ENCODE measurements at regions of chr11 and their contacts with region 1.

Region 1: DNA sequence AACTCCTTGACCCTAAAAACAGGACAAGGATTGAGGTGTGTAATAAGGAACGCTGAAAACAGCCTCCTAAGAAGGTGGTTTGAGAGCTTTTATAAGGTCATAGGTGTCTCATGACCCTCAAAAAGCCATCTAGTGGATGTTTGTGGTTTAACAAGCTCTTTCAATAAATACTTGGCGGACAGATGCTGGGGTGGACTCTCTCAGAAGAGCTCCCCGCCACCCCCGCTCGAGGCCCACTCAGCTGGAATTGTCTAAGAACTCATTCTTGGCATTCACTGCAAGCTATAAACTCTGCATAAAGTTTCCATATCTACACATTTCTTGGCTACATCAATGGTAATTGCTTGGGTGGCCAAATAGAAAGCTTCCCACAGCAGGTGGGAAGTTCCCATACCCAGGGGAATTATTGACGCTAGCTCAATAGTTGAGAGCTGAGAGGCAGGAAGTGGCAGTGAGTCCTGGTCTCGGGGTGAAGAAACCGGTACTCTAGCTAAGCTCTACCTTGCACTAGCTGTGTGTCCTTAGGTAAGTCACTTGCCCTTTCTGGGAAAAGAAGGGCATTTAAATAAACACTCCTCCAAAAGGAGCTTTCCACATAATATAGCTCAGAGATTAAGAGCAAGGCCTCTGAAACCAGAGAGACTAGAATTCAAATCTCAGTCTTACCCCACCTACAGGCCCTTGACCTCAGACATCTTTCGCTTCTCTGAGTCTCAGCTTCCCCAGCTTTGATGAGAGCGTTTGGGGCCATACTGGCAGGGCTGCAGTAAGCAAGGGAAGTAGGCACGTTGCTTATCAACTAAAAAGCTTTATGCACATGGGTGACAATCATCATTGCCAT is 6.4 kb downstream of the MS4A15 start:
- DNase-seq: peak; percentile 66
- CTCF ChIP-seq: peak; percentile 49

Region 2: GRCh38 chr11:60544076-60544475 is 219.0 kb before region 1 on chr11:
- CTCF ChIA-PET with region 1: no interaction called
- POLR2A ChIA-PET with region 1: no interaction called
- DNase-seq: no peak
- CTCF ChIP-seq: no peak

Region 3: DNA sequence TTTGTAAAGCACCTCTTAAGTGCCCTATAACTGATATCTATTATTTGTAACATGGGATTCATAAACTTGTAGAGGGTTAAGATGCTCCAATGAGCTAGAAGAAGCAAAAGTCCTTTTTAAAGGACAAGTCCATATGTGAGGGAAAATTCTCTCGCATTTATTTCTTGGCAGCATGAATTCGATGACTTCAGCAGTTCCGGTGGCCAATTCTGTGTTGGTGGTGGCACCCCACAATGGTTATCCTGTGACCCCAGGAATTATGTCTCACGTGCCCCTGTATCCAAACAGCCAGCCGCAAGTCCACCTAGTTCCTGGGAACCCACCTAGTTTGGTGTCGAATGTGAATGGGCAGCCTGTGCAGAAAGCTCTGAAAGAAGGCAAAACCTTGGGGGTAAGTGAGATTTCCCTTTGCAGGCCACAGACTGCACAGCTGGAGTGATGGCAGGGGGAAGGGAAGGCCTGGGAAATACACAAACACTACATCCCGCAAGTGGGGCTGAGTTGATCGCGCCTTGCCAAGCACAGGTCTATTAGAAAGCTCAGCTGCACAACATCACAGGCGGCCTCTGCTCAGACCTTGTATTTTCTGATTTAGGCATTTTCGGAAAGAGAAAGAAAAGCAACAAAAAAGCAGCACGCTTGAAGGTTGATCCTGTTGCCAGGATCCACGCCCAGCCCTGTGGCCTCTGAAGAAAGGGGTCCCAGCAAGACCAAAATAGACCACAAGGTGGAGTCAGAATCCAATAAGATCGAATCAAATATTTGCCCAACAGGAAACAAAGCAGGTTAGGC is 62.2 kb before region 1 on chr11:
- CTCF ChIA-PET with region 1: interaction called, 19 read pairs
- POLR2A ChIA-PET with region 1: no interaction called
- DNase-seq: peak; percentile 45
- CTCF ChIP-seq: peak; percentile 43

Region 4: GRCh38 chr11:60750926-60751325 is 12.1 kb before region 1 on chr11:
- CTCF ChIA-PET with region 1: interaction called, 50 read pairs
- POLR2A ChIA-PET with region 1: no interaction called
- DNase-seq: no peak
- CTCF ChIP-seq: no peak

Region 5: GRCh38 chr11:60887556-60887955 is 124.5 kb after region 1 on chr11:
- CTCF ChIA-PET with region 1: interaction called, 12 read pairs
- POLR2A ChIA-PET with region 1: no interaction called
- DNase-seq: no peak
- CTCF ChIP-seq: peak; percentile 59

Region 6: GRCh38 chr11:60906132-60906972 is 143.3 kb after region 1 on chr11 and contains the start of gene PRPF19:
- CTCF ChIA-PET with region 1: interaction called, 33 read pairs
- POLR2A ChIA-PET with region 1: no interaction called
- DNase-seq: peak; percentile 97
- CTCF ChIP-seq: no peak

Measured in GM10248 (cell line).